Endothelial cell of umbilical vein (primary cell): ENCODE measurements at regions of chr10 and their contacts with region 1.

Region 1: DNA sequence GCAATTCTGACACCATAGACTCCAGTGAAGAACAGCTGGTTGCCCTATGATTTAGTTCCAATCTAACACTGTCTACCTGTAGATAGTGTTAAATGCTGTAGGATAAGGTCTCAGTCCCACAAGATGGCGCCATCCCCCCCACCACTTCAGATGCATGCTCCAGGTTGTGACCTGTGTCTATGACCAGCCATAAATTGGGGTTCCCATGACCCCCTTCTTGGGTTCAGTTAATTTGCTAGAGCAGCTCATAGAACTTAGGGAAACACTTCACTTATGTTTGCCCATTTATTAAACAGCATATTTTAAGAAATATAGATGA is 13.1 kb downstream of the CCSER2 start:
- DNase-seq: no peak
- H3K4me3 ChIP-seq: no peak overlapping the region
- H3K27ac ChIP-seq: no peak overlapping the region
- H3K4me1 ChIP-seq: peaks cover 13% of the 10 kb centered on the region
- H3K27me3 ChIP-seq: no peaks in the 10 kb centered on the region
- CTCF ChIP-seq: no peak
- POLR2A ChIP-seq: no peak

Region 2: GRCh38 chr10:84352251-84352842 is 10.8 kb after region 1 on chr10:
- CTCF ChIA-PET with region 1: interaction called, 43 read pairs
- POLR2A ChIA-PET with region 1: no interaction called
- dilution Hi-C with region 1: no loop called
- intact Hi-C with region 1: no loop called
- DNase-seq: peak; percentile 63
- H3K4me3 ChIP-seq: no peak overlapping the region
- H3K27ac ChIP-seq: no peak overlapping the region
- H3K4me1 ChIP-seq: peaks cover 7% of the 10 kb centered on the region
- H3K27me3 ChIP-seq: no peaks in the 10 kb centered on the region
- CTCF ChIP-seq: peak; percentile 66 to 78
- POLR2A ChIP-seq: no peak

Region 3: GRCh38 chr10:85767891-85768290 is 1426.4 kb after region 1 on chr10:
- CTCF ChIA-PET with region 1: no interaction called
- POLR2A ChIA-PET with region 1: interaction called, 11 read pairs
- dilution Hi-C with region 1: no loop called
- intact Hi-C with region 1: no loop called
- DNase-seq: no peak
- H3K4me3 ChIP-seq: no peak overlapping the region
- H3K27ac ChIP-seq: no peak overlapping the region
- H3K4me1 ChIP-seq: no peaks in the 10 kb centered on the region
- H3K27me3 ChIP-seq: no peaks in the 10 kb centered on the region
- CTCF ChIP-seq: no peak
- POLR2A ChIP-seq: no peak